OCI-LY7 (cell line): ENCODE measurements at regions of chr10 and their contacts with region 1.

Region 1: DNA sequence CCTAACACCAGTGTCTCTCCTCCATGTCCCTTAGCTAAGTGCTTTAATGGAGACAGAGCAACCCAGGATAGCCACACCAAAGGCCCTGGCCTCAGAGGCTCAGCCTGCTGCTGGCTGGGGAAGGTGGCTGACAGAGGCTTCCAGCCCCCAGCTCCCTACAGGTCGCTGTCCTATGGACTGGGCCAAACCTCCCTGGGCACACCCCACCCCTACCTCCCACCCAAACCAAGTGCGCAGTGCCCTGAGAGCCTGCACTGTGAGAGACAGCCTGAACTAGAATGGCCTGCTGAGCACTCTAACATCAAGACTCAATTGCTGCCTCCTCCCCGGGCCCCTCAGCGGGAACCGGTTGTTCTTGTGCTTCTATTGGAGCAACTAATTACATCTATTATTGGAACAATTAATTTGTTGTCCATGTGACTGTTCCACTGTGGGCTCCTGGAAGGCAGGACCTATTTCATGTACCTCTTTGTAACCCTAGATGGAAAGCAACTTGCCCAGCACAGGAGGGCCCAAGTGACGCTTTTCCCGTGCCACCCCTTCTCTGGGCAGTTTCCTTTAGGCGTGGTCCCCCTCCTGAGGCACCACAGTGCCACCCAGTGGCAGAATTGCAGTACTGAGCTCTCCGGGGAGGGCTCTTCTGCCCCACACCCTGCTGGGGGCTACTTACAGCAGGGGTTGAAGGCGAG is 63.6 kb upstream of the WAPL start:
- DNase-seq: peak; percentile 86
- H3K4me3 ChIP-seq: no peak overlapping the region
- H3K27ac ChIP-seq: no peak overlapping the region
- H3K4me1 ChIP-seq: peaks cover 30% of the 10 kb centered on the region
- CTCF ChIP-seq: peak; percentile 98

Region 2: GRCh38 chr10:86100581-86101061 is 484.6 kb before region 1 on chr10:
- CTCF ChIA-PET with region 1: no interaction called
- POLR2A ChIA-PET with region 1: no interaction called
- intact Hi-C with region 1: loop called (anchors 10 kb)
- DNase-seq: peak; percentile 66
- H3K4me3 ChIP-seq: no peak overlapping the region
- H3K27ac ChIP-seq: no peak overlapping the region
- H3K4me1 ChIP-seq: no peaks in the 10 kb centered on the region
- CTCF ChIP-seq: peak; percentile 84

Region 3: DNA sequence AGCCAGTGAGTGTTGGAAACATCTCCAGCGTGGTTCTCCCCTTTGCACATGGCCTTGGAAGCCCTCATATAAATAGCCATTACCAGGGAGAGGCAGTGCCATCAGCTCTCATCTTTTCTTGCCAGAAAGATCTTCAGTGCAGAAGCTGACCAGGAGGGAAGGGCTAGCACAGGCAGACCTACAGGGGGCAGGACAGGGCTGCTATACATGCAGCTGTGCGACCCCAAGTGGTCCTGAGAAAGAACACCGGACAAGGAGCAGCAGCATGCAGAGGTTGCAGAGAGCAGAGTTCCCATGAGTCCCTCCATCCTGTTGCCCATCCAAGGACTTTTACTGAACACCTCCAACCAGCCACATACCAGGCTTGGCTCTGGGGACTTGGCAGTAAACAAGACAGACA is 235.7 kb before region 1 on chr10:
- CTCF ChIA-PET with region 1: interaction called, 5 read pairs
- POLR2A ChIA-PET with region 1: no interaction called
- intact Hi-C with region 1: loop called (anchors 2 kb)
- DNase-seq: peak; percentile 78
- H3K4me3 ChIP-seq: no peak overlapping the region
- H3K27ac ChIP-seq: no peak overlapping the region
- H3K4me1 ChIP-seq: no peaks in the 10 kb centered on the region
- CTCF ChIP-seq: peak; percentile 90

Region 4: GRCh38 chr10:86376852-86377796 is 208.1 kb before region 1 on chr10:
- CTCF ChIA-PET with region 1: no interaction called
- POLR2A ChIA-PET with region 1: no interaction called
- intact Hi-C with region 1: loop called (anchors 1 kb)
- DNase-seq: peak; percentile 71
- H3K4me3 ChIP-seq: no peak overlapping the region
- H3K27ac ChIP-seq: no peak overlapping the region
- H3K4me1 ChIP-seq: peaks cover 8% of the 10 kb centered on the region
- CTCF ChIP-seq: peak; percentile 95

Region 5: DNA sequence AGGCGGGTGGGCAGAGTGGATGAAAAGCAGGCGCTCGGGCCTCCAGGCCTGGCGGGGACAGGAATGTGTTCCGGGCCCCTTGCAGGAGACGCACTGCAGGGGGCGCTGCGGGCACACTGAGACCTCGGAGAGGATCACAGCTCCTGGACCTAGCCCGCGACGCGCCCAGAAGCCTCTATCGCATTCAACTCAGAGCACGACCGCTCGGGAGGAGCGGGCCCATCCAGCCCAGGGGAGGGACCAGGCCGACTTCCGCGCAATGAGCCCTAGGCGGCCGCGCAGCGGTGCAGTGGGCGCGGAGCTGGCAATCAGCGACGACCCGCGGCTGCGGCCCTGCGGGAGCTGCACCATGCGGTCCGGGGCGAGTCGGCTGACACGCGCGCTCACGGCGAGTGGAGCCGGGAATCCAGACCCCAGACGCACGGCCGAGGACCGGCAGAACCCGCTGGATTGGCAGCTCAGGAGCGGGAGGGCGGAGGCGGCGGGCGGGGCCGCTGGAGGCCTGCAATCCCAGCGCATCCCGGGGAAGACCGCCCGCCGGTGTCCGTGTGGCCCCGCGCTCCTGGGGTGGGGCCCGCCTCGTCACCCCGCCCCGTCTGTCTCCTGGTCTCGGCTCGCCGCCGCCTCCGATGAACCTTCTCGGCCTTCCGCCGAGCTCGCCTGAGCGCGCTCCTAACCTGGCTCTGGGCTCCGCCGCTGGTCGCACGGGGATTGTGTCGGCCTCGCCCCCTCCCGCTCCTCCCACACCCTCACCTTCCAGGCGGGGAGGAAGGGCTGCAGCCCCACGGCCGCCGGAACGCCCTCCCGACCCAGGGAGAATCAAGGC is 185.1 kb before region 1 on chr10:
- CTCF ChIA-PET with region 1: interaction called, 6 read pairs
- POLR2A ChIA-PET with region 1: interaction called, 9 read pairs
- intact Hi-C with region 1: loop called (anchors 1 kb)
- DNase-seq: peak; percentile 99
- H3K4me3 ChIP-seq: peak overlapping the region; percentile 82
- H3K27ac ChIP-seq: peak overlapping the region; percentile 81
- H3K4me1 ChIP-seq: peaks cover 69% of the 10 kb centered on the region
- CTCF ChIP-seq: peak; percentile 90

Region 6: DNA sequence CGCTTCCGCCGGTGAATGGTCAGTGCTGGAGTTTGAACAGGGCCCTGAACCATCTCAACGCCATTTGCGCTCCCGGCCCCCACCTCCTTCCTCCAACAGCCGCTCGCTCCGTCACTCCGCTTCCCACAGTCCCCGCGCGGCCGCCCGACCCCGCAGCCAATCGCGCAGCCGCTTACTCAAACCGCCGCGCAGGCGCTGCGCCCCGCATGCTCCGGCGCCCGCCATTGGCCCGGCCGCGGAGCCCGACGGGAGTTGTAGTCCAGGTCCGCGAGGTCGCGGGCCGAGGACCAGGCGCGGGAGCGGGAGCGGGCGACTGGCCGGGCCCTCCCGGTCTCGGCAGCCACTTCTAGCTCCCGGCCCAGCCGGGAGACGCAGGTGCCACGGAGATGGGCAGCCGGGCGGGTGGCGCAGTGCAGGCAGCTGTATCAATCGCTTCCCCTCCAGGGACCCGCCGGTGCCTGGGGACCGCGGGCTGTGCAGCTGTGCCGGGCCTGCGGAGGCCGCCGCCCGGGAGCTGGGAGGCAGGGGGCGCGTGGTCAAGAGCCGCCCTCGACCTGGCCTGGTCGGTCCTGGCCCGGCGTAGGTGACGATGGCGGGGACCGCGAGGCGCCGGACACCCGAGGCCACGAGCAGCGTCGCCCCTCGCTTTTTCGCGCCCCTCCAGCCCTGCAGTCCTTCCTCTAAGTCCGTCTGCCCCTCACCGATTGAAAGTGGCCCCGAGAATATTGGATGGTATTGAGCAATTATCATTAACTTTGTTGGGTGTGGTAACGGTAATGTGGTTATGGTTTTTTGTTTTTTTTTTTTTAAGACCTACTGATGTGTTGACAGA is 63.3 kb before region 1 on chr10 and contains the start of gene WAPL:
- CTCF ChIA-PET with region 1: interaction called, 3 read pairs
- POLR2A ChIA-PET with region 1: interaction called, 3 read pairs
- intact Hi-C with region 1: loop called (anchors 1 kb)
- DNase-seq: peak; percentile 95
- H3K4me3 ChIP-seq: peak within 1 kb of the TSS; percentile 93
- H3K27ac ChIP-seq: peak within 1 kb of the TSS; percentile 70
- H3K4me1 ChIP-seq: peaks cover 56% of the 10 kb centered on the region
- CTCF ChIP-seq: no peak
- total RNA-seq, gene WAPL: 51.1 and 56.6 TPM in 2 replicates